ENCODE measurements at regions of chr14 and their contacts with region 1.

Region 1: GRCh38 chr14:38721822-38722431 is 381.1 kb downstream of the SEC23A start:
- DNase-seq: peak; percentile 21 to 94 (median 80)

Region 2: DNA sequence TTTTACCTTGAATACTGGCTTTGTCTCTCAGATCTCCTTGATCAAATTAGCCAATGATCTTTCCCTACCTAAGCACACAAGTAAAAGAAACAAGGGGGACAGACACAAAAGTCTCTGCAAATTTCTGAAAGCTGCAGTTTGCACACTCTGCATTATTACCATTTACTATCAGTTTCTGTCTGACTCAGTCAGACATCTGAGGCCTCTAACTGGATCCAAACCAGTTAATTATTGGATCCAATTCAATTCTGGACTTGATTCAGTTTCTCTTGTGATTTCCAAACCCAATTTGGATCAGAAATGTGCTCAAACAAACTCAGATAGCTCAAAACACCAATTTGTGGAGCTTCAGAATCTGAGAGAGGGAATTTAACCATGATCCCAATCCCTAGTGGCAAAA is 497.6 kb before region 1 on chr14:
- intact Hi-C with region 1: no loop called
- DNase-seq: no peak

Region 3: DNA sequence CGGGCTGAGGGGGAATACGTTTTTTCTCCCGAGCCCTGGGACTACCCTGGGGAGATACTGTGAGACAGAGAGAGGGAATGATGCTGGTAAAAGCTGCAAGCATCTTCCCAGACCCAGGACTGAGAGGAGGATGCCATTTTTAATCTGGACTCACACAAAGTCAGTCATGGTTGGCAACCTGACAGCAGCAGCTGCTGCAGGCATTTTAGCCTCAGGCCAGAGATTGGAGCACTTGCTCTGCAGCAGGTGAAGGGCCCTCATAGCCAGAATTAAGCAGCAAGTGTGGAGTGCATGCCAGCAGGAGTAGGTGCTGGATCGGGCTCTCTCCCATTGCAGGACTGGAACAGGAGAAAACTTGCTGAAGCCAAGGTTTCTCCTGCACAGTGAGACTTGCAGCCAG is 105.0 kb before region 1 on chr14:
- intact Hi-C with region 1: no loop called
- DNase-seq: peak in 35 of 42 donors; percentile 3 to 78 (median 34)

Region 4: DNA sequence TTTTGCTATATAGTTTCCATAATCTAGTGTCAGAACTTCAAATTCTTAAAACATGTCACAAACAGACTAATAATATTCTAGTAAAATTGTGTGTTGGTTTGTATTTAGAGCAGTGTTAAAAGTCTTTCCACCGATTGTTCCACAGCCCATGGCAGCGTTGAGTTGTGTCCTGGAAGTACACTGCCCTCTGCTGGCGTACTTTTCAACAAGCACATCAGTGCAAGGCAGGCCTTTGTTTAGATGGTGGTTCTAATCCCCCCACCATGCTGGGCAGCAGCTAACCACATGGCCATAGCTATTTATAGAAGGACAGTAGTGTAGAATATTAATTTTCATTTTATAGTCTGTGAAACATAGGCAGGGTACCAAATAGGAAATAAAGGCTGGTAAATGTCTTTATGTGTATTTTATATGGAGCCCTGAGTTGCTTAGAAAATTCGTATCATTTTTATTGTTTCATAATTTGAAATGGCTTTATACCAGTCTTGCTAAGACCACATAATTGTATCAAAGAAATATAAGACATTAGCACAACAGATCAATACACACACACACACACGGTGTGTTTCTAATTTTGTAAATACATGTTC is 145.7 kb after region 1 on chr14:
- intact Hi-C with region 1: loop called (anchors 5 kb)
- DNase-seq: peak; percentile 63 to 96 (median 88)

Region 5: DNA sequence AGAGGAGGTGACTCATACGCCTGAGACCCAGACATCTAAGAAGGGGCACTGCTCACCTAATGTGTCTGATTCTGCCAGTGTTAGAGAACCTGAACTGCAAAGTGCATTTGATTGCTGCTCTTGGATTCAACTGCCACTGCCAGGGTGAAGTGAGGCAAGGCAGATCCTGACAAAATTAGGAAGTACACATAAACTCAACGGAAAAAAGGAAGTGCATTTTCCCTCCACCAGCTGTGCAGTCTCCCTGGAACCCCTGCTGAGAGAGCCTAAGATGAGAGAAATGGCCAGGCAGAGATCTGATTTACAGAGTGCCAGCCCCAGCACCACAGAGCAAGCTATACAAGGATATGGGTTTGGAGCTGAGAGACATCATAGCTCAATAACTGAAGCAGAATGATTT is 165.8 kb after region 1 on chr14:
- intact Hi-C with region 1: no loop called
- DNase-seq: no peak

Region 6: DNA sequence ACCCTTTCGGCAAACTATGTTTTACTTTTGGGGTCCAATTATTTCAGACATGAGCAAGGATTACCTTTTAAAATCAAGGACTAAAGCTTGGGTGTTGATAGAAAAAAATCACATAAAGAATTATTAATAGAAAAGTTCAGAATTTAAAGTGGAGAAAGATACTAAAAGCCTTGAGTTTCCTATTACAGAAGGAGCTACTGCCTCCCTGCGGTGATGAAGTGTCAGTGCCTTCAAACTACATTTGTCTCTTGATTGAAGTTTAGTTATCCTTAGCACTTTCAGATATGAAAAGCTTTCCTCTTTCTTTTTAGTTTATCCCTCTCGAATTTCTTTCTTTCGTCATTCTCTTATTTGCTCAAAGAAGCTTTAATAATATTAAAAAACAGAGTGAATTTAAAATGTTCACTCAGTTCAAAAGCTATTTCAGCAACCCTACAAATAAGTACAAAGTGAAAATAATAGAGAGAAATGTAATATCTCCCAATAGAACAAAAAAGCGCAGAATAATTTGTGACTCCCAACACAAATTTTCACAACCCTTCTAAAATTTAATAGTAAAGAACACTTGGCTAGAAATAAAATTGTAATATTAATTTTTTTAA is 293.5 kb after region 1 on chr14:
- intact Hi-C with region 1: loop called (anchors 5 kb)
- DNase-seq: peak in 38 of 42 donors; percentile 18 to 86 (median 58)